Endothelial cell of umbilical vein (primary cell): ENCODE measurements at regions of chr6 and their contacts with region 1.

Region 1: GRCh38 chr6:1832836-1833787 is 223.4 kb downstream of the FOXC1 start:
- DNase-seq: peak; percentile 91
- H3K4me3 ChIP-seq: peak overlapping the region in 1 of 3 experiments; percentile 2
- H3K27ac ChIP-seq: peak overlapping the region; percentile 30
- H3K4me1 ChIP-seq: peaks cover 23% of the 10 kb centered on the region
- H3K27me3 ChIP-seq: no peaks in the 10 kb centered on the region
- CTCF ChIP-seq: no peak
- POLR2A ChIP-seq: no peak

Region 2: DNA sequence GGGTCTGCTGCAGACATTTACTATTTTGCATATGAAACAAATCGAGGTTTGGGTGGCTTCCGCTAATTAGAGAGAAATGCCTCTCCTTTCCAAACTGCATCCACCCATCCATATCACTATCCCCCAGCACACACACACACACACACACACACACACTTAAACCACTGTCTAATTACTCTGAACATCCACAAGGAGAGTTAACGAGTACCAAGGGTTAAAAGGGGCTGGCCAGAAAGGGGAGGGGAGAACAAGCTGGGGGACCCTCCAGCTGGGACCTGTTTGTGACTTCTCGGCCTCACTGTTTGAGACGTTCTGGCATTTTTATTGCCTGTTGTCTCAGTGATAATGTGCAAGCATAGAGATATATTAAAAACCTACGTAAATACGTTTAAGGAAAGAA is 37.8 kb after region 1 on chr6:
- CTCF ChIA-PET with region 1: no interaction called
- POLR2A ChIA-PET with region 1: no interaction called
- dilution Hi-C with region 1: no loop called
- intact Hi-C with region 1: no loop called
- DNase-seq: no peak
- H3K4me3 ChIP-seq: no peak overlapping the region
- H3K27ac ChIP-seq: no peak overlapping the region
- H3K4me1 ChIP-seq: no peaks in the 10 kb centered on the region
- H3K27me3 ChIP-seq: no peaks in the 10 kb centered on the region
- CTCF ChIP-seq: no peak
- POLR2A ChIP-seq: no peak

Region 3: GRCh38 chr6:1903780-1904465 is 70.8 kb after region 1 on chr6:
- CTCF ChIA-PET with region 1: no interaction called
- POLR2A ChIA-PET with region 1: no interaction called
- dilution Hi-C with region 1: no loop called
- intact Hi-C with region 1: loop called (anchors 2 kb)
- DNase-seq: peak; percentile 72
- H3K4me3 ChIP-seq: no peak overlapping the region
- H3K27ac ChIP-seq: peak overlapping the region; percentile 5
- H3K4me1 ChIP-seq: peaks cover 18% of the 10 kb centered on the region
- H3K27me3 ChIP-seq: no peaks in the 10 kb centered on the region
- CTCF ChIP-seq: no peak
- POLR2A ChIP-seq: no peak